ENCODE measurements at regions of chr5 and their contacts with region 1.

Region 1: GRCh38 chr5:107571621-107572536 is 98.9 kb downstream of the EFNA5 start:
- DNase-seq: peak; percentile 84
- ATAC-seq: peak; percentile 91
- H3K4me3 ChIP-seq: peak overlapping the region; percentile 32; the same call in 1 of the 2 replicates
- H3K27ac ChIP-seq: no peak overlapping the region
- H3K4me1 ChIP-seq: 0 out of 2 replicates have a peak, but pooled peaks cover 1% of the 10 kb centered on the region
- H3K27me3 ChIP-seq: no peaks in the 10 kb centered on the region
- CTCF ChIP-seq: peak; percentile 85
- POLR2A ChIP-seq: no peak
- RAD21 ChIP-seq: peak; percentile 83

Region 2: GRCh38 chr5:106269252-106269843 is 1302.5 kb before region 1 on chr5:
- CTCF ChIA-PET with region 1: no interaction called
- POLR2A ChIA-PET with region 1: no interaction called
- dilution Hi-C with region 1: no loop called
- in situ Hi-C with region 1: no loop called
- intact Hi-C with region 1: loop called (anchors 5 kb)
- DNase-seq: peak; percentile 57
- ATAC-seq: peak; percentile 69
- H3K4me3 ChIP-seq: no peak overlapping the region
- H3K27ac ChIP-seq: no peak overlapping the region
- H3K4me1 ChIP-seq: no peaks in the 10 kb centered on the region
- H3K27me3 ChIP-seq: no peaks in the 10 kb centered on the region
- CTCF ChIP-seq: peak; percentile 71
- POLR2A ChIP-seq: no peak
- RAD21 ChIP-seq: peak; percentile 73

Region 3: DNA sequence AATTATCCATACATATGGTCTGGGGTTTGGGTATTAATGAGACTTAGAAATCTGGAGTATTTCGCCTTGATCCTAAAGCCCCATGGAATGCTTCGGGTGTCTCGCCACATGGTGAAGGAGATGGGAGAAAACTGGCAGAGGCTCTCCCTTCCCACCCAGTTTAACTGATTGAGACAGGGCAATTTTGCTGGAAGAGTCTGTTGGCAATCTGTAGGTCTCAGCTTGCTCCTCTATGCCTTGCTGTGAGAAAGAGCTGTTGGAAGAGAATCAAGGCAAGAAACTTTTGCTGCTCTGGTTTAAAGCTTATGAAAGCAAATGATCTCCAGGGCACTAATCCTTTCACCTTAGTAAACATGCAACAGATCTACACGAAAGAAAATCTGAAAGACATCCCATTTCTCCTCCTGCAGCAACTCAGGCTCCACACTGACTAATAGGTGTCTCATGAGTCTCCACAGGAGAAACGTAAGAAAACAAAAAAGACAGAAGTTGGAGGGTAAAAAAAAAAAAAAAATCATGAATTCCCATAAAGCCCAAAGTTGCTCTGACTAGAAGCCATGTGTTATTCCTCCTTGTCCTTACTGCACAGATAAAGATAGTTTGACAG is 271.1 kb before region 1 on chr5:
- CTCF ChIA-PET with region 1: no interaction called
- POLR2A ChIA-PET with region 1: no interaction called
- dilution Hi-C with region 1: no loop called
- in situ Hi-C with region 1: no loop called
- intact Hi-C with region 1: loop called (anchors 5 kb)
- DNase-seq: no peak
- ATAC-seq: no peak
- H3K4me3 ChIP-seq: no peak overlapping the region
- H3K27ac ChIP-seq: no peak overlapping the region
- H3K4me1 ChIP-seq: peaks cover 10% of the 10 kb centered on the region; the same call in 1 of the 2 replicates
- H3K27me3 ChIP-seq: no peaks in the 10 kb centered on the region
- CTCF ChIP-seq: no peak
- POLR2A ChIP-seq: no peak
- RAD21 ChIP-seq: no peak

Region 4: DNA sequence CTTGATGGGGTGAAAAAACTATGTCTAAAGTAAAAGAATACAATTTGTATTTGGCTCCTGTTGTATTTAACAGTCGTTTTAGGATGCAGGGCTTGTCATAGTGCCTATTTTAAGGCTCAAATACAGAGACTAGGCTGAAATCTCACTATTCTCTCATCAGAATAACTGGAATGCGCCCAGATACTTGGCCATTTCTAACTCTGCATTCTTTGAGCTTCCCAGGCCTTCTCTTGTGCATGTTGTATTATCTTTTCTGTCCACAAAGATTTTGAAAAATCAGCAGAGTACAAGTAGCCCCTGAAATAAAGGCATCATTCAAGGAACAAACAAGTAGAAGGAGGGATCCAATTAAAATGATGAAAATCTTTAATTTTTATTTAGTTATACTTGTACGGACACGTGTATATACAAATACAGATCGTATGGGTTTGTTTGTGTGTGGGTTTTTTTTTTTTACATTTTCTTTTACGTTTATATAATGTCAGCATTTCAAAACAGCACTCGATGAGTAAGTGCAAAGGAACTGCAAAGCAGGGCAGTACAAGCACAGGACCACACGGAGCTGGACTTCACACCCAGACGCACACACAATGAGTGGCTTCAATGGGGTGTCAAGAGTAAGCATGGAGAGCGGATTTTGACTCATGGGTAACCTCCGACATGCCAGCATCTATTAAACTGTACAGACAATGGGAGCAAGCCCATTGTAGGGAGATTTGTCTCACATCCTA is 195.2 kb before region 1 on chr5:
- CTCF ChIA-PET with region 1: interaction called, 4 read pairs
- POLR2A ChIA-PET with region 1: no interaction called
- dilution Hi-C with region 1: no loop called
- in situ Hi-C with region 1: no loop called
- intact Hi-C with region 1: loop called (anchors 1 kb)
- DNase-seq: peak; percentile 84
- ATAC-seq: peak; percentile 87
- H3K4me3 ChIP-seq: no peak overlapping the region
- H3K27ac ChIP-seq: peak overlapping the region; percentile 3; the same call in 1 of the 2 replicates
- H3K4me1 ChIP-seq: peaks cover 5% of the 10 kb centered on the region
- H3K27me3 ChIP-seq: no peaks in the 10 kb centered on the region
- CTCF ChIP-seq: no peak
- POLR2A ChIP-seq: no peak
- RAD21 ChIP-seq: no peak

Region 5: DNA sequence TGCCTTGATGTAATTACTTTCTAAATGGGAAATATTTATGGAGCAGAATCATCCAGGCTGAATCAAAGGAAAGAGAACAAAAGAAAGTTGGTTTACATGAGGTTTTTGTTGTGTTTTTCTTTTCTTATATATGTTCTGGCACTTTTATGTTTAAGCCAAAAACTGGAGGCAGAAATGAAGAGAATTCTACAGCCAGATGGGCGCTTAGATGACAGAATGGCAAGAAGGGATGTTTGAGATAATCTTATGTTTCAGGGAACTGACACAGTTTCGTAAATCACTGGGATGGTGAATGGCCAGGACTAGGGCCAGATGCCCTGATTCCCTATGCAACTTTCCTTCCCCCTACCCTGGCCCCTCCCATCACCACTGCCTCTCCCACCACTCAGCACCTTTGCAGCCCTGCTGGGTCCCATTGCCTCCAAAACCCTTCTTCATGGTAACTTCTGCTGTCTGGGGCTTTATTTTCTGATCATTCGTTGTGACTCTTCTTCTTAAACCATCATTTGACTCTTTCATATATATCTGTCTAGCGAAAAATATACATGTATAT is 13.0 kb before region 1 on chr5:
- CTCF ChIA-PET with region 1: interaction called, 20 read pairs
- POLR2A ChIA-PET with region 1: no interaction called
- dilution Hi-C with region 1: no loop called
- in situ Hi-C with region 1: no loop called
- intact Hi-C with region 1: no loop called
- DNase-seq: no peak
- ATAC-seq: no peak
- H3K4me3 ChIP-seq: no peak overlapping the region
- H3K27ac ChIP-seq: no peak overlapping the region
- H3K4me1 ChIP-seq: peaks cover 10% of the 10 kb centered on the region
- H3K27me3 ChIP-seq: no peaks in the 10 kb centered on the region
- CTCF ChIP-seq: no peak
- POLR2A ChIP-seq: no peak
- RAD21 ChIP-seq: no peak

Measured in IMR-90 (cell line).